Activated B cell treated with CpG ODN at 0.5 μM for 24 hours (primary cell): ENCODE measurements at regions of chr4 and their contacts with region 1.

Region 1: DNA sequence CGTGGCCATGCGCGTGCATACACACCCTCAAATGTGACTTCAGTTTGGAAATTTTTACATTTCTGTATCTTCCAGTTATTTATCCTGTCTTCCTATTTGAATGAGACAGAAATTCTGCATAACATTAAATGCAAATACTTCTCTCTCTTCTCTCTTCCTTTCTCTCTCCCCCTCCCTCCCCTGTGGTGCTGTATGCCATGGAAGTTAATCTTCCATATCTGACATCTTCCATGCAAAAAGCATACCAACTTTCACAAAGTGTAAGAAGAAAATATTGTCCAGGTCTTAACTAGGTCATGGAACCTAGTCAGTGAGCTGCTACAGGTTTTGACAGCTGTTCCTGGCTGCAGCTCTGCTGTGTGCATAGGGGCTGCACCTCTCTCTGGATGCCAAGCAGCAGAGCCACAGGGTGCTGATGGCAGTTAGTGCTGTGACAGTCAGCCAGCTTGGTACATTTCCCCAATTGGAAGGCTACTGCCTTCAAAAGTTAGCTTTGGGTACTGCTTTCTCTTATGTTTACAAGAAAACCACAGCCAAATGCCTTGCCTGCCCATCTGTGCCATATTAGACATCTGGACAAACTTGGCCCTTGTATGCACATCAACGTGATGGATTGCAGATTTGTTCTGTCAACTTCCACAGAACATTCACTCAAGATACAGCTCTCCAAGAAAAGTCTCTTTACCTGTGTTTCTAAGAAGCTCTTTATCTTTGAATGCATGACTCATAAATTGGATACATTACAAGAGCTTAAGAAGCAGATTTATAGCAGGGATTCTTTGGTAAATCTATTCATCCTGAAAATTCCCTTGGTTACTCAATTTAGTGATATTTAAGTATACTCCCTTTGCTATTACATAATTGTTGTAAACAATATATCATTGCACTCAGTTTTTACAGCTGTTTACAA is 623.8 kb downstream of the EPHA5 start:
- DNase-seq: no peak
- ATAC-seq: no peak
- H3K4me3 Mint-ChIP-seq: no peak overlapping the region
- H3K27ac Mint-ChIP-seq: no peak overlapping the region
- H3K4me1 Mint-ChIP-seq: no peaks in the 10 kb centered on the region
- H3K27me3 Mint-ChIP-seq: no peaks in the 10 kb centered on the region
- CTCF ChIP-seq: no peak

Region 2: GRCh38 chr4:64682946-64683345 is 363.5 kb before region 1 on chr4:
- CTCF ChIA-PET with region 1: no interaction called
- POLR2A ChIA-PET with region 1: no interaction called
- intact Hi-C with region 1: no loop called
- DNase-seq: no peak
- ATAC-seq: no peak
- H3K4me3 Mint-ChIP-seq: no peak overlapping the region
- H3K27ac Mint-ChIP-seq: no peak overlapping the region
- H3K4me1 Mint-ChIP-seq: no peaks in the 10 kb centered on the region
- H3K27me3 Mint-ChIP-seq: no peaks in the 10 kb centered on the region
- CTCF ChIP-seq: no peak

Region 3: DNA sequence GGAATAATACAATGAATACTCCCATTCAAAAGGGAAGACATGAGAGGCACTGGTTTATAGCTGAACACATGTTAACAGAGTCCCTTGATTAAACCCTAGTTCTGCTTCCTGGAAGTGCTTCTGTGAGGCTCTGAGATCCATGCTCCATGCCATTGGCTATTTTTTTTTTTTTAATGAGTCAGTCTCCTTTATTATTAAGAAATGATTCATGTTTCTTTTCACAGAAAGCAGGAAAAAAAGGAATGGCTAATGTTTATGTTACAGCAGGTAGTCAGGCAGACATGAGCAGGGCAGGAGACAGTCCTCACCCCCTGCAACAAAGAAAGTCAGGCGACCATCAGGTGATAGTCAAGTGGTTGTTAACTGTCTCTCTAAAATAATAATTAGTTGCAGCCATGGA is 25.1 kb after region 1 on chr4:
- CTCF ChIA-PET with region 1: no interaction called
- POLR2A ChIA-PET with region 1: no interaction called
- intact Hi-C with region 1: no loop called
- DNase-seq: no peak
- ATAC-seq: no peak
- H3K4me3 Mint-ChIP-seq: no peak overlapping the region
- H3K27ac Mint-ChIP-seq: no peak overlapping the region
- H3K4me1 Mint-ChIP-seq: no peaks in the 10 kb centered on the region
- H3K27me3 Mint-ChIP-seq: no peaks in the 10 kb centered on the region
- CTCF ChIP-seq: no peak

Region 4: DNA sequence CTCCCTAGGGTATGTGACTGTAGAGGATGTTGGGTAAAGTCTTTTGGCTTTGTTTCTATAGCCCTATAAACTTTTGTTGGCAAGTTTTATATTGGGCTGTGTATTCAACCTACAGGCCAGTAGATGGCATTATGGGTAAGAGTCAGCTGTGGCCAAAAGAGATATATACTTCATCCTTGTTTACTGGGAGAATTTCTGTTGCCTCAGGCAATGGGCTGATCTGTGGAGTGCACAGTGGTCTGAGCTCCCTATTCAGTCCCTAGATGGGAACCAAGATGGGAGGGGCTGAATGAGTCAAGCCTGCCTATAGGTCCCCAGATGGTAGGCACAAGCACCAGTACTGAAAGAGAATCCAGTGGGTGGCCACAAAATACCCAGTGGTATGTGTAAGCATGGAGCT is 43.2 kb after region 1 on chr4:
- CTCF ChIA-PET with region 1: no interaction called
- POLR2A ChIA-PET with region 1: no interaction called
- intact Hi-C with region 1: loop called (anchors 1 kb)
- DNase-seq: no peak
- ATAC-seq: no peak
- H3K4me3 Mint-ChIP-seq: no peak overlapping the region
- H3K27ac Mint-ChIP-seq: no peak overlapping the region
- H3K4me1 Mint-ChIP-seq: no peaks in the 10 kb centered on the region
- H3K27me3 Mint-ChIP-seq: no peaks in the 10 kb centered on the region
- CTCF ChIP-seq: no peak